ENCODE measurements at regions of chr3 and their contacts with region 1.

Region 1: GRCh38 chr3:69439643-69440270 is 53.9 kb upstream of the FRMD4B start:
- DNase-seq: no peak
- ATAC-seq: no peak
- H3K4me3 ChIP-seq: no peak overlapping the region
- H3K27ac ChIP-seq: no peak overlapping the region
- H3K4me1 ChIP-seq: no peaks in the 10 kb centered on the region
- H3K27me3 ChIP-seq: no peaks in the 10 kb centered on the region

Region 2: DNA sequence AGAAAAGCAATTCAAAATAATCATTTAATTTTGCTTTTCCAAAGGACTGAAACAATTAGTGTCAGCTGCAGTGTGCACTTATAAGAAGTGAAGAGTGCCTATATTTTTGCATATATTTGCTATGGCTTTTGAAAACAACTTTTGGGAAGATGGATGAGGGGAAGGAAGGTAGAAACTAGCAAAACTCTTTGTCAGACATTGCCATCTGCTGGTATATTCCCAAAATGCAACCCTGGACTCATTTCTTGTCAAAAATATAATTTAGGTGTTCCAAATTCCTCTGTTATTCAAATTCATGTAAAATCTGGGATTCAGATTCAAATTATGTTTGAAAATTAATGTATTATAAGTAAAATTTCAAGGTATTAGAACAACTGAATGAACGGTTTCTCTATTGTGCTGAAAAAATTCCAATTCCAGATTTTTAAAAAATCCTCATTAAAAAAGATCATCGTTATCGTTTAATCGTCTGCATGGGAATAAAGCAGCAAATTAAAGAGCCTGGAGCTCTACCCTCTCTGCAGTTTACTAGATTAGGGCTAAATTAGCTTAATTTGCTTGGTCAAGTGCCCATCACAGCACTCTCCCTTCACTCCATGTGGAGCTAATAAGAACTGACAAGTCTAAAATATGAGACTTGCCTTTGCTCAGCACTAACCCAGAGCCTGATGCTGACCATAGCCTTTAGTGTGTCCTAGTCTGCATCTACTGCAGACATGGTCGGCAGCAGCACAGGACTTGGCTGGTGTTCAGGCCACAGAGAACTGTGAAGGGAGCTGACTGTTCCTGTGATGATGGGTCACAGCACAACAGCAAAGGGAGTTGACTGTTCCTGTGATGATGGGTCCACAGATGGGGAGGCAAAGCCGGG is 231.6 kb after region 1 on chr3:
- intact Hi-C with region 1: loop called in 1 of 2 experiments (anchors 10 kb)
- DNase-seq: no peak
- ATAC-seq: no peak
- H3K4me3 ChIP-seq: no peak overlapping the region
- H3K27ac ChIP-seq: no peak overlapping the region
- H3K4me1 ChIP-seq: no peaks in the 10 kb centered on the region
- H3K27me3 ChIP-seq: peaks cover 0 to 2% of the 10 kb centered on the region in 2 donors

Measured in aorta (tissue), 5 donors.